Heart left ventricle (tissue), 16 donors: ENCODE measurements at regions of chr2 and their contacts with region 1.

Region 1: DNA sequence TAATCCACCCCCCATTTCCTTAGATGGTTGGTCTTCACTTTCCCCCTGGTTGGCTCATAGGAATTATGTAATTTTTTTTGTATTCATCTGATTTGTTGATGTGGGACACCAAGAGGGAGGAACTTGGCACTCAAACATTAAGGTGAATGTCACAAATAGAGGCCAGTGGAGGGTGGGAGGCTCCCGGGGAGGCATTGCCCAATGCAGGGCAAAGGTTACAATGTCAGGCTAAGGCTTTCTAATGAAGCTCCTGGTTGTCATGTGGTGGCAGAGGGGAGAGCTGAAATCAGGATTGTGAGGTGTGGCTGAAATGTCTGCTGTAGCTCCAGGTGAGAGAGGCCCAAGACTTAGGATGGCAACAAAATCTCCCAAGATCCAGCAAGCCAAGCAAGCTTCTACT is 42.7 kb downstream of the MPHOSPH10 start:
- DNase-seq: no peak
- ATAC-seq: no peak
- H3K4me3 ChIP-seq: no peak overlapping the region
- H3K27ac ChIP-seq: no peak overlapping the region
- H3K4me1 ChIP-seq: peaks cover 0 to 7% (median 0%) of the 10 kb centered on the region in 12 donors
- H3K27me3 ChIP-seq: no peaks in the 10 kb centered on the region
- CTCF ChIP-seq: no peak
- POLR2A ChIP-seq: no peak

Region 2: GRCh38 chr2:71068218-71069035 is 104.7 kb before region 1 on chr2 and contains the start of gene NAGK:
- intact Hi-C with region 1: no loop called
- DNase-seq: peak; percentile 97 to 99 (median 97)
- ATAC-seq: peak; percentile 92 to 97 (median 96)
- H3K4me3 ChIP-seq: peak within 1 kb of the TSS; percentile 60 to 98 (median 84)
- H3K27ac ChIP-seq: peak within 1 kb of the TSS; percentile 73 to 98 (median 93)
- H3K4me1 ChIP-seq: peaks cover 4 to 74% (median 25%) of the 10 kb centered on the region in 12 donors
- H3K27me3 ChIP-seq: no peaks in the 10 kb centered on the region
- CTCF ChIP-seq: peak in 2 of 12 donors; percentile 3 to 10
- POLR2A ChIP-seq: peak; percentile 63 to 97
- total RNA-seq, gene NAGK: 38.3 to 143 (median 46.4) TPM

Region 3: DNA sequence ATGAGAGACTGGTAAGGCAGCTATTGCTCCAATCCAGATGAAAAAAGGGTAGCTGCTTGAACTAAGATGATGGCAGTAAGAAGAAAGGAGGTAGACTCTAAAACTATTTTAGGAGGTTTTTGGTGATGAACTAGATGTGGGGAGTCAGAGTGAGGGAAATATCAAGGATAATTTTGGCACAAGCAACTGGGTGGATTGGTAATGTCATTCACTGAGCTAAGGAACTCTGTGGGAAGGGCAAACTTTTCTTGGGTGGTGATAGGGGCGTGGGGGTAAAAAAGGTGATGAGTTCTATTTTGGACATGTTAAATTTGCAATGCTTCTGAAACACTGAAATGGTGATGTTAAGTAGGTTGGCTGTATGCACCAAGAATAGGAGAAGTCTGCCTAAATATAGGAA is 34.5 kb after region 1 on chr2:
- intact Hi-C with region 1: loop called in 1 of 10 experiments (anchors 5 kb)
- DNase-seq: no peak
- ATAC-seq: no peak
- H3K4me3 ChIP-seq: no peak overlapping the region
- H3K27ac ChIP-seq: no peak overlapping the region
- H3K4me1 ChIP-seq: peaks cover 0 to 12% (median 0%) of the 10 kb centered on the region in 12 donors
- H3K27me3 ChIP-seq: no peaks in the 10 kb centered on the region
- CTCF ChIP-seq: no peak
- POLR2A ChIP-seq: no peak

Region 4: GRCh38 chr2:71226965-71227560 is 54.0 kb after region 1 on chr2 and contains the start of gene PAIP2B:
- intact Hi-C with region 1: no loop called
- DNase-seq: peak; percentile 98 to 99 (median 99)
- ATAC-seq: peak; percentile 95 to 98 (median 96)
- H3K4me3 ChIP-seq: peak within 1 kb of the TSS; percentile 64 to 91 (median 82)
- H3K27ac ChIP-seq: peak within 1 kb of the TSS; percentile 85 to 97 (median 94)
- H3K4me1 ChIP-seq: peaks cover 0 to 16% (median 7%) of the 10 kb centered on the region in 12 donors
- H3K27me3 ChIP-seq: peaks cover 0 to 5% (median 0%) of the 10 kb centered on the region in 9 donors
- CTCF ChIP-seq: no peak
- POLR2A ChIP-seq: peak; percentile 76 to 88
- total RNA-seq, gene PAIP2B: 38.3 to 89.0 (median 53.2) TPM

Region 5: DNA sequence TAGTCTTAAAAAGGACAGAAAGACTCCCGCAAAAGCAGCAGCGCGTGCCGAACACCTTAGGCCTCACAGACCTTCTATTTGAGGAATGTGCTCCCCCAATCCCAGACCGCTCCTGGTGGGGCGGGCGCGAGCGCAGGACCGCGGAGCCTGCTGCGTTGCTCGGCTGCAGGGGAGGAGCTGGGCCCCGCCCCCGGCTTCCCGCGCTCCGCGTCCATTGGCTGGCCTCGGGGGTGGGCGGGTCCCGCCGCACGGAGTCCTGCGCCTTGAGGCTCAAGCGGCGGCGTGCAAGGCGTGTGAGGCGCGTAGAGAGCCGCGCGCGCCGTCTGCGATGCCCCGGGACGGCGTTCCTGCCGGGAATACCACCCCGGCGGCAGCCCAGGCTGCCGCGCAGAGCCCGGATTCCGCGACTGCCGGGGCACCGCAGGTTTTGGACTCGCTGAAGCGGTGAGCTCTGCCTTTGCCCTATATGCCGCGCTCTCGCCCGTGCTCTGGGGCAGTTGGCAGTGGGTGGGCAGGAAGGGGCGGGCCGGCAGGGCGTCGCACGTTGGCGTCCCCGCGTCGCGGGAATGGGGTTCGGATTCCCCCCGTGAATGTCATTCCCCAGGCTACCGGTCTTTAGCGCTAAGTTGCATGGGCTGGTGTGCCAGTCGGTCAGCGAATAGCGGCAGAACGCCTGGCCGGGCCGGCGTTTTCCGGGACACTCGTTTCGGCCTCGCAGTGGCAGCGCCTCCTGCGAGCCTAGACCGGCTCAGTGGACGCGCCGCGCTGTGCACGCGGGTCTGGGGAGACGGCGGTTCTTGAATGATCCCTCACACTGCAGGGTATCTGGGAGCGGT is 103.4 kb after region 1 on chr2:
- intact Hi-C with region 1: no loop called
- DNase-seq: peak; percentile 91 to 95 (median 94)
- ATAC-seq: peak; percentile 89 to 99 (median 96)
- H3K4me3 ChIP-seq: peak overlapping the region; percentile 37 to 83 (median 64)
- H3K27ac ChIP-seq: peak overlapping the region; percentile 62 to 94 (median 89)
- H3K4me1 ChIP-seq: peaks cover 0 to 40% (median 17%) of the 10 kb centered on the region in 12 donors
- H3K27me3 ChIP-seq: peaks cover 0 to 14% (median 0%) of the 10 kb centered on the region in 9 donors
- CTCF ChIP-seq: peak in 3 of 12 donors; percentile 13 to 15 (median 14)
- POLR2A ChIP-seq: peak; percentile 68 to 94

Region 6: DNA sequence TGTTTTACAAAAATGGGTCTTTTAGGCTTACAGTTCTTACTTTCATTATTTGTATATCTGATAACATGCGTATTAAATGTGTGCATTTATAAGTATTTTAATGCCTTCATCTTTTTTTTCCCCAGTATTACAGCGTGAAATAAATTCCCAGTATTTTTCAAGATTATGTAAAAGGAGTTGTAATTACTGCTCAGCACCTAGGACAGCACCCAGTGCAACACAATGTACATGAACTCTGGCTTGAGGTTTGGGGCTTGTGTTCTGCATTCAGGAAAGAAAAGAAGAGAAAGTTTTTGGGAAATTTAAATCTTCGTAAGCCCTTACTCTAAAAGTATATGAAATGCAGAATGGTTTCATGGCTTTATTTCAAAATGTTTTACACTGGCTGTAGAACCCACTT is 175.2 kb after region 1 on chr2:
- intact Hi-C with region 1: no loop called
- DNase-seq: no peak
- ATAC-seq: peak in 2 of 4 donors; percentile 45 to 59
- H3K4me3 ChIP-seq: no peak overlapping the region
- H3K27ac ChIP-seq: no peak overlapping the region
- H3K4me1 ChIP-seq: peaks cover 0 to 31% (median 10%) of the 10 kb centered on the region in 12 donors
- H3K27me3 ChIP-seq: no peaks in the 10 kb centered on the region
- CTCF ChIP-seq: no peak
- POLR2A ChIP-seq: no peak